PC-9 (cell line): ENCODE measurements at regions of chr19 and their contacts with region 1.

Region 1: DNA sequence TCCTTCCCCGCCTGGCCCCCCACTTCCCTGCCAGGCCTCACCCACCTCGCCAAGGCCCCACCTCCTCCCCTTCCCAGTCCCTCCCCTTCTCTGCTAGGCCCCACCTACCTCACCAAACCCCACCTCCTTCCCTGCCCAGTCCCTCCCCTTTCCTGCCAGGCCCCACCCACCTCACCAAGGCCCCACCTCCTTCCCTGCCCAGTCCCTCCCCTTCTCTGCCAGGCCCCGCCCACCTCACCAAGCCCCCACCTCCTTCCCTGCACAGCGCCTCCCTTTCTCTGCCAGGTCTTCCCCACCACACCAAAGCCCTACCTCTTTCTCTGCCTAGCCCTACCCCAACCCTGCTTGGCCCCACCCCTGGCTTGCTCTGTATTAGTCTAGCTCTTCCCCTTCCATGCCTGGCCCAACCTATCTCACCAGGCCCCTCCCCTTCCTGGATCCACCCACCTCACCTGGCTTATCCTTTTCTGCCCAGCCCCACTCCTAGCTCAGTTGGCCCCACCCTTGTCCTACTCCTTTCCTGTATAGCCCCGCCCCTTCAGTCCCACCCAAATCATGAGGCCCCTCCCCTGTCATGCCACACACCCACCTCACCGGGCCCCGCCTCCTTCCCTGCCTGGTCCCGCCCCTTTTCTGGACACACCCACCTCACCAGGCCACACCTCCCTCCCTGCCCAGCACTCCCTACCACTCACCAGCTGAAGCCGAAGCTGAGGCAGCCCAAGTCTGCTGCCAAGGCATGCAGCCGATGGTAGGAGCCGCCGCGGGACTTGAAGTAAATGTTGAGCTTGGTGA is 16.2 kb downstream of the CERS1 start:
- DNase-seq: peak; percentile 33 to 73
- H3K4me3 ChIP-seq: no peak overlapping the region
- H3K27ac ChIP-seq: no peak overlapping the region
- H3K4me1 ChIP-seq: no peaks in the 10 kb centered on the region
- H3K27me3 ChIP-seq: no peaks in the 10 kb centered on the region
- CTCF ChIP-seq: no peak

Region 2: GRCh38 chr19:18895038-18895823 is 15.5 kb after region 1 on chr19:
- CTCF ChIA-PET with region 1: interaction called, 10 read pairs
- POLR2A ChIA-PET with region 1: no interaction called
- intact Hi-C with region 1: no loop called
- DNase-seq: peak; percentile 68 to 71
- H3K4me3 ChIP-seq: peak overlapping the region; percentile 67
- H3K27ac ChIP-seq: no peak overlapping the region
- H3K4me1 ChIP-seq: no peaks in the 10 kb centered on the region
- H3K27me3 ChIP-seq: no peaks in the 10 kb centered on the region
- CTCF ChIP-seq: peak; percentile 70

Region 3: GRCh38 chr19:19410275-19411192 is 530.8 kb after region 1 on chr19:
- CTCF ChIA-PET with region 1: no interaction called
- POLR2A ChIA-PET with region 1: interaction called, 14 read pairs
- intact Hi-C with region 1: no loop called
- DNase-seq: no peak
- H3K4me3 ChIP-seq: no peak overlapping the region
- H3K27ac ChIP-seq: no peak overlapping the region
- H3K4me1 ChIP-seq: peaks cover 39% of the 10 kb centered on the region
- H3K27me3 ChIP-seq: no peaks in the 10 kb centered on the region
- CTCF ChIP-seq: no peak